CD4-positive, alpha-beta T cell (primary cell): ENCODE measurements at regions of chr13 and their contacts with region 1.

Region 1: GRCh38 chr13:41502673-41503072 is 45.3 kb downstream of the RGCC start:
- DNase-seq: peak in 10 of 14 experiments; percentile 14 to 66 (median 38)
- ATAC-seq: peak; percentile 74
- H3K4me3 ChIP-seq: no peak overlapping the region
- H3K4me3 Mint-ChIP-seq: peak overlapping the region; percentile 44
- H3K27ac ChIP-seq: no peak overlapping the region
- H3K27ac Mint-ChIP-seq: peak overlapping the region; percentile 80
- H3K4me1 ChIP-seq: peaks cover 52% of the 10 kb centered on the region
- H3K4me1 Mint-ChIP-seq: peaks cover 63% of the 10 kb centered on the region
- H3K27me3 ChIP-seq: no peaks in the 10 kb centered on the region
- H3K27me3 Mint-ChIP-seq: no peaks in the 10 kb centered on the region
- CTCF ChIP-seq: no peak

Region 2: DNA sequence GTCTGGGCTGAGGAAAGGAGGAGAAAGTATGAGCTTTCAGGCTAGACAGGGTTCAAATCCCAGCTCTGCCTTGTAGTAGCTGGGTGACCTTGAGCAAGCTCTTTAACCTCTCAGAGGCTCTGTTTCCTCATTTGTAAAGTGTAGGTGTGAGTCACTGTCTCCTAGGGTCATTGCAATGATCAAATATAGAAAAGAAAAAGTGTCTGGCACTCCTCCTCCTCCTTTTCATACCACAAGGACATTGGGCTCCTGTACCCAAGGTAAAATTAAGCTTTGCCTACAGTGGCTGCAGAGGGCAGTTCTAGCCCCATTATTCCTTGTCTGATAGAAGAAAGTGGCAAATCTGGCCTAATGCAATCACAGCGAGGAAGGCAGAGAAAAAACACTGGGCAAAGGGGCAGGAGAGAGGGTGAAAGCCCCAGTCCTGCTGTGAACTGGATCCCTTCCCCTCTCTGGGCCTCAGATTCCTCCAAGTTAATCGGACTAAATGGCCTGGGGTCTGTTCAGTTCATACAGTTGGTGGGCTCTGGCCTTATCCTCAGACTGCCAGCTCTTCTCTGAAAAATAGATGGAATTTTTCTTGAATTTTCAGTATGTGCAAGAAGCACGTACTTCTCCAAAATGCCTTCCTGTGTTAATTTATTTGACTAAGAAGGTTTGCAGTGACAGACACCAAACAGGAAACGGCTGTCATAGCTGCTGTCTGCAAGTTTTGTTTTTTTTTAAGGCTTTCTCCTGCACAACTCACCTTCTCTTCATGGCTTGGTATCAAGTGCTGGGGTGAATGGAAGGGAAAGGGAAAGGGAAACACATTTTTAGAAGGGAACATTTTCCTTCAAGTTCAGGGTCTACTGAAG is 10.0 kb before region 1 on chr13:
- CTCF ChIA-PET with region 1: no interaction called
- POLR2A ChIA-PET with region 1: interaction called, 11 read pairs
- intact Hi-C with region 1: no loop called
- DNase-seq: peak in 9 of 14 experiments; percentile 17 to 79 (median 32)
- ATAC-seq: peak; percentile 80
- H3K4me3 ChIP-seq: peak overlapping the region; percentile 6
- H3K4me3 Mint-ChIP-seq: peak overlapping the region; percentile 81
- H3K27ac ChIP-seq: peak overlapping the region; percentile 86 to 94
- H3K27ac Mint-ChIP-seq: peak overlapping the region; percentile 100
- H3K4me1 ChIP-seq: peaks cover 66% of the 10 kb centered on the region
- H3K4me1 Mint-ChIP-seq: peaks cover 91% of the 10 kb centered on the region
- H3K27me3 ChIP-seq: no peaks in the 10 kb centered on the region
- H3K27me3 Mint-ChIP-seq: no peaks in the 10 kb centered on the region
- CTCF ChIP-seq: no peak